Activated CD8-positive, alpha-beta T cell treated with anti-CD3 and anti-CD28 coated beads for 36 hours (primary cell): ENCODE measurements at regions of chr3 and their contacts with region 1.

Region 1: GRCh38 chr3:42425736-42426407 is 15.5 kb upstream of the LYZL4 start:
- DNase-seq: no peak
- ATAC-seq: no peak
- H3K4me3 Mint-ChIP-seq: no peak overlapping the region
- H3K27ac Mint-ChIP-seq: no peak overlapping the region
- H3K4me1 Mint-ChIP-seq: no peaks in the 10 kb centered on the region
- H3K27me3 Mint-ChIP-seq: peaks cover 17% of the 10 kb centered on the region
- CTCF ChIP-seq: no peak

Region 2: GRCh38 chr3:41997702-41998550 is 427.9 kb before region 1 on chr3:
- CTCF ChIA-PET with region 1: no interaction called
- POLR2A ChIA-PET with region 1: no interaction called
- intact Hi-C with region 1: no loop called
- DNase-seq: peak; percentile 21
- ATAC-seq: no peak
- H3K4me3 Mint-ChIP-seq: no peak overlapping the region
- H3K27ac Mint-ChIP-seq: no peak overlapping the region
- H3K4me1 Mint-ChIP-seq: no peaks in the 10 kb centered on the region
- H3K27me3 Mint-ChIP-seq: peaks cover 4% of the 10 kb centered on the region
- CTCF ChIP-seq: peak; percentile 26

Region 3: GRCh38 chr3:42264399-42265058 is 161.3 kb before region 1 on chr3:
- CTCF ChIA-PET with region 1: no interaction called
- POLR2A ChIA-PET with region 1: no interaction called
- intact Hi-C with region 1: loop called (anchors 5 kb)
- DNase-seq: peak; percentile 54
- ATAC-seq: peak; percentile 69
- H3K4me3 Mint-ChIP-seq: no peak overlapping the region
- H3K27ac Mint-ChIP-seq: no peak overlapping the region
- H3K4me1 Mint-ChIP-seq: peaks cover 8% of the 10 kb centered on the region
- H3K27me3 Mint-ChIP-seq: peaks cover 61% of the 10 kb centered on the region
- CTCF ChIP-seq: no peak